ENCODE measurements at regions of chr12 and their contacts with region 1.

Region 1: GRCh38 chr12:2267703-2268501 is 215.1 kb downstream of the CACNA1C start:
- DNase-seq: no peak
- H3K4me3 ChIP-seq: no peak overlapping the region
- H3K27ac ChIP-seq: peak overlapping the region; percentile 37
- H3K4me1 ChIP-seq: peaks cover 50% of the 10 kb centered on the region
- H3K27me3 ChIP-seq: no peaks in the 10 kb centered on the region
- CTCF ChIP-seq: no peak
- POLR2A ChIP-seq: no peak

Region 2: GRCh38 chr12:2113119-2113912 is 154.6 kb before region 1 on chr12:
- intact Hi-C with region 1: no loop called
- DNase-seq: no peak
- H3K4me3 ChIP-seq: no peak overlapping the region
- H3K27ac ChIP-seq: no peak overlapping the region
- H3K4me1 ChIP-seq: no peaks in the 10 kb centered on the region
- H3K27me3 ChIP-seq: no peaks in the 10 kb centered on the region
- CTCF ChIP-seq: no peak
- POLR2A ChIP-seq: no peak

Region 3: GRCh38 chr12:2163172-2163941 is 104.5 kb before region 1 on chr12:
- intact Hi-C with region 1: loop called (anchors 10 kb)
- DNase-seq: peak in 1 of 2 donors; percentile 93
- H3K4me3 ChIP-seq: no peak overlapping the region
- H3K27ac ChIP-seq: peak overlapping the region; percentile 60
- H3K4me1 ChIP-seq: peaks cover 29% of the 10 kb centered on the region
- H3K27me3 ChIP-seq: no peaks in the 10 kb centered on the region
- CTCF ChIP-seq: no peak
- POLR2A ChIP-seq: no peak

Region 4: GRCh38 chr12:2194060-2194459 is 73.8 kb before region 1 on chr12:
- intact Hi-C with region 1: no loop called
- DNase-seq: no peak
- H3K4me3 ChIP-seq: no peak overlapping the region
- H3K27ac ChIP-seq: no peak overlapping the region
- H3K4me1 ChIP-seq: no peaks in the 10 kb centered on the region
- H3K27me3 ChIP-seq: no peaks in the 10 kb centered on the region
- CTCF ChIP-seq: no peak
- POLR2A ChIP-seq: no peak